CD4-positive, alpha-beta T cell (primary cell): ENCODE measurements at regions of chr18 and their contacts with region 1.

Region 1: DNA sequence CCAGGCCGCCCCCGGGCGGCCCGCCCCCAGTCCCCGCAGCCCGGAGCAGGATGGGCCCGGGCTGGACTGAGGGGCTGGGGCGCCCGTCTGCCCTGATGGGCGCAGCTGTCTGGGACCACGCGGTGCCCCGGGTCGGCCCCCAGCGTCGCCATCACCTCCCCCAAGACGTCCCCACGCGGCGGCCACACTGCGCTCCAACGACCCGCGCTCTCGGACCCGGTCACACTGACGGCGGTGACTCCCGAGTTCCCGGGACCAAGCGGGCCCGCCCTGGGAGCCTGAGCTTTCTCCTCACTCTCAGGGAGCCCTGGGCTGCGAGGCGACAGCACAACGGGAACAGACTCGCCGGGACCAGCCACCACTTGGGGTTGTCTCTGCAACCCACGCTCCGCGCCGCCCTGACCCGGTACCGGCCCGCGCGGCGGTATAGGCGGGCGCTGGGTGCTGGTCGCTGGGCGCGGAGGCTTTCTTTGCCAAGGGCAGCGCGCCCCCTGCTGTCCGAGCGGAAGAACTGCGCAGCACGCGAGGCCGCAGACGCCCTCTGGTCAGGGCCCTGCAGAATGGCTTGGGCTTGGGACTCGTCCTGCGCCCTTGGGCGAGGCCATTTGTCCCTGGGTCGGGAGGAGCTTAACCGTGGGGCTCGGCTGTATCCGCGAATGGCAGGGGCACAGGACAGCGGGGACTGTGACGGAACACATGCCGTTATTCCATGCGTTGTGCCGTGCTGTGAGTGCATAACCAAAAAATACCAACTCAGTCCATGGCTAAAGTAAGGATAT is 54.8 kb upstream of the ANKRD62 start:
- DNase-seq: peak; percentile 47 to 86 (median 66)
- ATAC-seq: peak; percentile 90
- H3K4me3 ChIP-seq: peak overlapping the region; percentile 51
- H3K4me3 Mint-ChIP-seq: no peak overlapping the region
- H3K27ac ChIP-seq: no peak overlapping the region
- H3K27ac Mint-ChIP-seq: no peak overlapping the region
- H3K4me1 ChIP-seq: peaks cover 13% of the 10 kb centered on the region
- H3K4me1 Mint-ChIP-seq: peaks cover 5% of the 10 kb centered on the region
- H3K27me3 ChIP-seq: peaks cover 6 to 15% of the 10 kb centered on the region in 2 experiments
- H3K27me3 Mint-ChIP-seq: peaks cover 29% of the 10 kb centered on the region
- CTCF ChIP-seq: peak; percentile 98

Region 2: DNA sequence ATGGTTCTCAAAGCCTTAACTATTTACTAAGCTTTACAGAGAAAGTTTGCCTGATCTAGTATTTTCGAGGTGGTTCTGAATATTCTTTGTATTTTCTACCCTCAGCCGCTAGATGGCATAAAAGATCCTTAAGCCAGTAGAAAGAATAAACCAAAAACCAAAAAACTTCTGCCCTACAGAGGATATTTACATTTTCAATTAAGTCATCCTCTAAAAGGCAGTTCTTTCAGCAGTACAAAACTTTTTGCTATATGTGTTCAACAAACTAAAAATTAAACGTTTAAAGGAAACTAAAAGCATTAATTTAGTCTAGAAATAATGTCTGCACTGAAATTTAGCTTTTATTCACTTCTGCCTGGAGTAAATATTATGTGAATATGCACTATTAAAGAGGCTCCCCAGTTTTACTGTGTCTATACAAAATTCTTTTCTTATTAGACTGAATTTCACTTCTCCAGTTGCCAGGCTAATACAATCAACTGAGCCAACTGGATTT is 1187.0 kb before region 1 on chr18:
- CTCF ChIA-PET with region 1: no interaction called
- POLR2A ChIA-PET with region 1: no interaction called
- intact Hi-C with region 1: loop called (anchors 2 to 5 kb)
- DNase-seq: peak in 3 of 14 experiments; percentile 25 to 39 (median 28)
- ATAC-seq: no peak
- H3K4me3 ChIP-seq: no peak overlapping the region
- H3K4me3 Mint-ChIP-seq: no peak overlapping the region
- H3K27ac ChIP-seq: no peak overlapping the region
- H3K27ac Mint-ChIP-seq: no peak overlapping the region
- H3K4me1 ChIP-seq: no peaks in the 10 kb centered on the region
- H3K4me1 Mint-ChIP-seq: no peaks in the 10 kb centered on the region
- H3K27me3 ChIP-seq: peaks cover 0 to 3% of the 10 kb centered on the region in 2 experiments
- H3K27me3 Mint-ChIP-seq: peaks cover 4% of the 10 kb centered on the region
- CTCF ChIP-seq: peak; percentile 74

Region 3: GRCh38 chr18:11310476-11311086 is 728.2 kb before region 1 on chr18:
- CTCF ChIA-PET with region 1: no interaction called
- POLR2A ChIA-PET with region 1: no interaction called
- intact Hi-C with region 1: loop called in 1 of 2 experiments (anchors 5 kb)
- DNase-seq: peak in 3 of 14 experiments; percentile 10 to 26 (median 22)
- ATAC-seq: no peak
- H3K4me3 ChIP-seq: no peak overlapping the region
- H3K4me3 Mint-ChIP-seq: no peak overlapping the region
- H3K27ac ChIP-seq: no peak overlapping the region
- H3K27ac Mint-ChIP-seq: no peak overlapping the region
- H3K4me1 ChIP-seq: no peaks in the 10 kb centered on the region
- H3K4me1 Mint-ChIP-seq: no peaks in the 10 kb centered on the region
- H3K27me3 ChIP-seq: no peaks in the 10 kb centered on the region
- H3K27me3 Mint-ChIP-seq: no peaks in the 10 kb centered on the region
- CTCF ChIP-seq: no peak

Region 4: GRCh38 chr18:11324956-11325873 is 713.6 kb before region 1 on chr18:
- CTCF ChIA-PET with region 1: no interaction called
- POLR2A ChIA-PET with region 1: no interaction called
- intact Hi-C with region 1: no loop called
- DNase-seq: no peak
- ATAC-seq: no peak
- H3K4me3 ChIP-seq: no peak overlapping the region
- H3K4me3 Mint-ChIP-seq: no peak overlapping the region
- H3K27ac ChIP-seq: no peak overlapping the region
- H3K27ac Mint-ChIP-seq: no peak overlapping the region
- H3K4me1 ChIP-seq: no peaks in the 10 kb centered on the region
- H3K4me1 Mint-ChIP-seq: no peaks in the 10 kb centered on the region
- H3K27me3 ChIP-seq: peaks cover 0 to 2% of the 10 kb centered on the region in 2 experiments
- H3K27me3 Mint-ChIP-seq: no peaks in the 10 kb centered on the region
- CTCF ChIP-seq: no peak

Region 5: GRCh38 chr18:11654736-11655605 is 383.9 kb before region 1 on chr18:
- CTCF ChIA-PET with region 1: no interaction called
- POLR2A ChIA-PET with region 1: no interaction called
- intact Hi-C with region 1: loop called in 1 of 2 experiments (anchors 5 kb)
- DNase-seq: peak in 11 of 14 experiments; percentile 10 to 50 (median 21)
- ATAC-seq: no peak
- H3K4me3 ChIP-seq: no peak overlapping the region
- H3K4me3 Mint-ChIP-seq: no peak overlapping the region
- H3K27ac ChIP-seq: no peak overlapping the region
- H3K27ac Mint-ChIP-seq: no peak overlapping the region
- H3K4me1 ChIP-seq: peaks cover 5% of the 10 kb centered on the region
- H3K4me1 Mint-ChIP-seq: no peaks in the 10 kb centered on the region
- H3K27me3 ChIP-seq: peaks cover 4 to 10% of the 10 kb centered on the region in 2 experiments
- H3K27me3 Mint-ChIP-seq: peaks cover 82% of the 10 kb centered on the region
- CTCF ChIP-seq: peak; percentile 55

Region 6: GRCh38 chr18:11733031-11733430 is 305.8 kb before region 1 on chr18:
- CTCF ChIA-PET with region 1: interaction called, 12 read pairs
- POLR2A ChIA-PET with region 1: no interaction called
- intact Hi-C with region 1: loop called (anchors 1 to 2 kb)
- DNase-seq: peak; percentile 33 to 78 (median 58)
- ATAC-seq: peak; percentile 56
- H3K4me3 ChIP-seq: no peak overlapping the region
- H3K4me3 Mint-ChIP-seq: no peak overlapping the region
- H3K27ac ChIP-seq: no peak overlapping the region
- H3K27ac Mint-ChIP-seq: no peak overlapping the region
- H3K4me1 ChIP-seq: peaks cover 4% of the 10 kb centered on the region
- H3K4me1 Mint-ChIP-seq: no peaks in the 10 kb centered on the region
- H3K27me3 ChIP-seq: peaks cover 8 to 11% of the 10 kb centered on the region in 2 experiments
- H3K27me3 Mint-ChIP-seq: peaks cover 54% of the 10 kb centered on the region
- CTCF ChIP-seq: peak; percentile 85

Region 7: DNA sequence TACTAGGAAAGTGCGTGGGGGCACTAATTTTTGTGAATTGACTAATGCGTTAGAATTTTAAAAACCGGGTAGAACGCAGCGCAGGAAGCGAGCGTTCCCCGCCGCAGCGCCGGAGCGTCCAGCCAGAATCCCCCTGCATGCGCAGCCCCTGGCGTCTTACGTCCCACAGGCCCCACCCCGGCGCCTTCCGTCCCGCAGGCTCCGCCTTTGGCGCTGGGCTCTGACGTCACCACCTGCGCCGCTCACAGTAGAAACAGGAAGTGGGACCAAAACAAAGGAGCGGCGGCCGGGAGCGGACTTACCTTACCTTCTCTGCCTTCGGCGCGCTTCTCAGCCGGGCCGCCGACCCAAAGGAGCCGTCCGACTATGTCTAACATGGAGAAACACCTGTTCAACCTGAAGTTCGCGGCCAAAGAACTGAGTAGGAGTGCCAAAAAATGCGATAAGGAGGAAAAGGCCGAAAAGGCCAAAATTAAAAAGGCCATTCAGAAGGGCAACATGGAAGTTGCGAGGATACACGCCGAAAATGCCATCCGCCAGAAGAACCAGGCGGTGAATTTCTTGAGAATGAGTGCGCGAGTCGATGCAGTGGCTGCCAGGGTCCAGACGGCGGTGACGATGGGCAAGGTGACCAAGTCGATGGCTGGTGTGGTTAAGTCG is 187.6 kb before region 1 on chr18 and contains the start of gene CHMP1B:
- CTCF ChIA-PET with region 1: no interaction called
- POLR2A ChIA-PET with region 1: no interaction called
- intact Hi-C with region 1: no loop called
- DNase-seq: peak; percentile 95 to 99 (median 97)
- ATAC-seq: peak; percentile 74
- H3K4me3 ChIP-seq: peak within 1 kb of the TSS; percentile 64
- H3K4me3 Mint-ChIP-seq: peak within 1 kb of the TSS; percentile 100
- H3K27ac ChIP-seq: peak within 1 kb of the TSS; percentile 85 to 92
- H3K27ac Mint-ChIP-seq: peak within 1 kb of the TSS; percentile 97
- H3K4me1 ChIP-seq: peaks cover 27% of the 10 kb centered on the region
- H3K4me1 Mint-ChIP-seq: peaks cover 53% of the 10 kb centered on the region
- H3K27me3 ChIP-seq: no peaks in the 10 kb centered on the region
- H3K27me3 Mint-ChIP-seq: no peaks in the 10 kb centered on the region
- CTCF ChIP-seq: no peak
- total RNA-seq, gene CHMP1B: 64.4 to 67.4 TPM

Region 8: DNA sequence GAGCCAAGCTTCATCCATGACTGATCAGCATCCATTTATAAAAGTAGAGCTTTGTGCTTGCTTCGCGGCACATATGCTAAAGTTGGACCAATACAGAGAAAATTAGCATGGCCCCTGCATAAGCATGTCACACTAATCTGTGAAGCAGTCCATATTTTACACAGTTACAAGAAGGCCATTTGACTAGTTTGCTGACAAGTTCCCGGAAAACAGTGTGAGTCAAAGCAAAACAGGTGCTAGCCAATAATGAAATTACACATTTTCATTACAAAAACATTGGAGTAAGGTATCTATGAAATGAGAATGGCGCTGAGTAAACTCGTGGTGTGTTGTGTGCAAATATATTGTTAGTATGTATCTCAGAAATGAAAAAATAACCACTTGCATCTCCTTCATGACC is 59.5 kb after region 1 on chr18:
- CTCF ChIA-PET with region 1: no interaction called
- POLR2A ChIA-PET with region 1: no interaction called
- intact Hi-C with region 1: no loop called
- DNase-seq: no peak
- ATAC-seq: no peak
- H3K4me3 ChIP-seq: no peak overlapping the region
- H3K4me3 Mint-ChIP-seq: no peak overlapping the region
- H3K27ac ChIP-seq: no peak overlapping the region
- H3K27ac Mint-ChIP-seq: no peak overlapping the region
- H3K4me1 ChIP-seq: no peaks in the 10 kb centered on the region
- H3K4me1 Mint-ChIP-seq: no peaks in the 10 kb centered on the region
- H3K27me3 ChIP-seq: no peaks in the 10 kb centered on the region
- H3K27me3 Mint-ChIP-seq: peaks cover 13% of the 10 kb centered on the region
- CTCF ChIP-seq: no peak